A673 (cell line): ENCODE measurements at regions of chr17 and their contacts with region 1.

Region 1: DNA sequence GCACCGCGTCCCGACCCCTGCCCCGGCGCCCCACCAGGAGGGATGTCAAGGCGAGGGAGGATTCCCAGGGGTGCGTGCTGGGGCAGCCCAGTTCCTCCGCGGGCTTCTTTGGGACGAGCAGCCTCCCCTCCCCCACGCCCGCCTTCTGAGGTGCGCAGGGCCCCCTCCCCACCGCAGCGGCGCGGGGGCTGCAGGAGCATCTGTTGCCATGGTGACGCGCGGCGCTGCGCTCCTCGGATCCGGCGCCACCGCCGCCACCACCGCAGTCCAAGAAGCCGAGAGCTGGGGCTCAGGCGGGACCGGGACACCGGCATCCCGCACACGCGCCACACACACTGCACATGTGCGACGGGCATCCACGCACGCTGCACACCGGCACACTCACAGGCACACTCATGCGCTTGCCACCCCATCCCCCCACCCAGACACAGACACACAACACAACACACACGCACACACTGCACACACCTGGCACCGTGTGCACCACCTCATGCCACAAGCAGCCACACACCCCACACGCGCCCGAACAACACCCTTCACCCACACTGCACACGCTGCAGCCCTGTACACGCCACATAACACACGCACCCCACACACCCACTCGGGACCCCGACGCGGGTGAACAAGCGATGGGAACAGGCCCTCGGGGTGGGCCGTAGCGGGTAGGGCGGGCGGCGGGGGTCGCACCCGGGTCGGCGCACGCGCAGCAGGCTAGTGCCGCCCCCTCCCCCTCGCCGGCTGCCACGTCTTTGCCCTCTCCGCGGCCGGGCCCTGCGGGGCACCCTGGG is 17.0 kb downstream of the ENPP7 start:
- DNase-seq: no peak
- H3K4me3 ChIP-seq: peak overlapping the region; percentile 33
- H3K27ac ChIP-seq: no peak overlapping the region
- H3K4me1 ChIP-seq: peaks cover 25% of the 10 kb centered on the region
- H3K27me3 ChIP-seq: peaks cover 23% of the 10 kb centered on the region
- CTCF ChIP-seq: no peak

Region 2: DNA sequence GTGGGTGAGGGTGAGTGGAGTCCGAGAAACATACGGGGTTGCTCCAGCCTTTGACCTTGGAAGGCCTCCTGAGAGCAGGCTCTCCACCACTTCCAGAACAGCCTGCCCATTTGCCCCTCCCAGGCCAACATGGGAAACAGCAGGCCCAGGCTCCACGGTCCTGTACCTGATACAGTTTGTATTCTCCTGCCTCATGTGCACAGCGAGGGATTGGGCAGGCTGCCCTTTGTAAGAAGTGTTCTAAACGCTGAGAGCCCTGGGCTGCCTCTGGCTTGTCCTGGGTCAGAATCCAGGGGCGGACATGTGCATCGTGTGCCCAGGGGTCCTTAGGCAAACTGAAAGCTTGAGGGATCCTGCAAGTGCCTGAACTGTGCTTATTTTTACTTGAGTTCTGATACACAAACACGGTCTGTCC is 26.9 kb after region 1 on chr17:
- CTCF ChIA-PET with region 1: interaction called, 10 read pairs
- POLR2A ChIA-PET with region 1: no interaction called
- intact Hi-C with region 1: no loop called
- DNase-seq: no peak
- H3K4me3 ChIP-seq: no peak overlapping the region
- H3K27ac ChIP-seq: no peak overlapping the region
- H3K4me1 ChIP-seq: peaks cover 17% of the 10 kb centered on the region
- H3K27me3 ChIP-seq: no peaks in the 10 kb centered on the region
- CTCF ChIP-seq: no peak

Region 3: DNA sequence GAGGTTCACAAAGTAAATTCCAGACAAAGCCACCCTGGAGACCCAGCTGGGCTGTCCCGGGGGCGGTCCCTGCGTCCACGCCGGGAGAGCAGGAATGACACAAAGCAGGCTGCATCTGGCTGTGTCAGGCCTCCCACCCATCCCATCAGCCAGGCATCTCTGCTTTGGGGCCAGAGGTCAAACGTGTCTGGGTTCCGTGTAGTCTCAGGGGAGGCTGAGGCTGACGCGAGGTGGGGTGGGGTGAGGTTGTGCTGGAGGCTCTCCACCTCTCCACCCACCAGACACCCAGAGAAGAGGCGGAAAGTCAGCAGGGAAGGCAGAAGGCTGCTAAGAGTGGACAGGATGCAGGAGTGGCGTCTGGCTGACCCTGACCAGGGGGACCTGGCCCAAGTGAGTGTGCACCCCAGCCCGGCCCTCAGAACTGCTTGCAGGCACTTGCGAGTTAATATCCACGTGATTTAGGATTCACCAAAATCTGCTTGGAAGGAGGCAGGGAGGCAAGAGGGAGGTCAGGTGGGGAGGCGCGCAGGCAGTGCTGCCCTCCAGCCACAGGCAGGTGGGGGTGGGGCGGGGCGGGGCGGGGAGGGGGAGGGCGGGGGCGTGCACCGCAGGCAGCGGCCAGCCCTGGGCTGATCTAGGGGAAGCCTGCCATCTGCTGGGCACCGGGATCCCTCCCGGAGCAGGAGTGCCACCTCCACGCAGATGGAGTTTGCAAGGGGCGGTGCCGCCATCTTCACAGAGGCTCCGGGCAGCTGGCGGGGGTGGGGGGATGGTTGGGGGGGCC is 243.6 kb after region 1 on chr17:
- CTCF ChIA-PET with region 1: no interaction called
- POLR2A ChIA-PET with region 1: no interaction called
- intact Hi-C with region 1: loop called (anchors 2 kb)
- DNase-seq: peak; percentile 90
- H3K4me3 ChIP-seq: peak overlapping the region; percentile 48
- H3K27ac ChIP-seq: peak overlapping the region; percentile 67
- H3K4me1 ChIP-seq: peaks cover 41% of the 10 kb centered on the region
- H3K27me3 ChIP-seq: no peaks in the 10 kb centered on the region
- CTCF ChIP-seq: peak; percentile 59